Panc1 (cell line): ENCODE measurements at regions of chr1 and their contacts with region 1.

Region 1: DNA sequence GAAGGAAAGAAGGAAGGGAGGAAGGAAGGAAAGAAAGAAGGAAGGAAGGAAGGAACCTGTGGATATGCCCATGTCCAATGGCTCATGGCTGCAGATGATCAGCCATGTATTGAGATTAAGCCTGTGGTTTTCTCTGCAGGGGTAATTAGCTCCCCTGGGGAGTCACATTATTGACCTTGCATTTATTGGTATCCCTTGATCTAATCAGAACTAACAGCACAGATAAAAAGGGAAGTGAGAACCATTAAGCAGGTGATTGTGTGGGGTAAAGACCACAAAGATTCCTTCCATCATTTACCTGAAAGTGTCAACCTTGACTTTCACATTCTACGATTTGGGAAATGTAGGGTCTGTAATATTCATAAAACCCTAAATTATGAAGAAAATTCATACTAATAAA is 390.7 kb downstream of the BRINP2 start:
- DNase-seq: no peak
- ATAC-seq: no peak
- H3K4me3 ChIP-seq: no peak overlapping the region
- H3K27ac ChIP-seq: no peak overlapping the region
- H3K4me1 ChIP-seq: no peaks in the 10 kb centered on the region
- H3K27me3 ChIP-seq: no peaks in the 10 kb centered on the region
- CTCF ChIP-seq: no peak

Region 2: GRCh38 chr1:177517551-177517950 is 43.9 kb before region 1 on chr1:
- CTCF ChIA-PET with region 1: no interaction called
- POLR2A ChIA-PET with region 1: interaction called, 18 read pairs
- in situ Hi-C with region 1: no loop called
- intact Hi-C with region 1: no loop called
- DNase-seq: no peak
- ATAC-seq: no peak
- H3K4me3 ChIP-seq: no peak overlapping the region
- H3K27ac ChIP-seq: no peak overlapping the region
- H3K4me1 ChIP-seq: no peaks in the 10 kb centered on the region
- H3K27me3 ChIP-seq: no peaks in the 10 kb centered on the region
- CTCF ChIP-seq: no peak